ENCODE measurements at regions of chr13 and their contacts with region 1.

Region 1: GRCh38 chr13:27826379-27827353 is 34.4 kb downstream of the GSX1 start:
- DNase-seq: peak; percentile 12
- ATAC-seq: peak; percentile 83
- H3K4me3 ChIP-seq: no peak overlapping the region
- H3K27ac ChIP-seq: no peak overlapping the region
- H3K4me1 ChIP-seq: no peaks in the 10 kb centered on the region
- H3K27me3 ChIP-seq: peaks cover 2 to 6% of the 10 kb centered on the region in 2 experiments
- CTCF ChIP-seq: peak; percentile 87 to 96 (median 94)
- EP300 ChIP-seq: no peak
- POLR2A ChIP-seq: no peak
- RAD21 ChIP-seq: peak; percentile 87

Region 2: DNA sequence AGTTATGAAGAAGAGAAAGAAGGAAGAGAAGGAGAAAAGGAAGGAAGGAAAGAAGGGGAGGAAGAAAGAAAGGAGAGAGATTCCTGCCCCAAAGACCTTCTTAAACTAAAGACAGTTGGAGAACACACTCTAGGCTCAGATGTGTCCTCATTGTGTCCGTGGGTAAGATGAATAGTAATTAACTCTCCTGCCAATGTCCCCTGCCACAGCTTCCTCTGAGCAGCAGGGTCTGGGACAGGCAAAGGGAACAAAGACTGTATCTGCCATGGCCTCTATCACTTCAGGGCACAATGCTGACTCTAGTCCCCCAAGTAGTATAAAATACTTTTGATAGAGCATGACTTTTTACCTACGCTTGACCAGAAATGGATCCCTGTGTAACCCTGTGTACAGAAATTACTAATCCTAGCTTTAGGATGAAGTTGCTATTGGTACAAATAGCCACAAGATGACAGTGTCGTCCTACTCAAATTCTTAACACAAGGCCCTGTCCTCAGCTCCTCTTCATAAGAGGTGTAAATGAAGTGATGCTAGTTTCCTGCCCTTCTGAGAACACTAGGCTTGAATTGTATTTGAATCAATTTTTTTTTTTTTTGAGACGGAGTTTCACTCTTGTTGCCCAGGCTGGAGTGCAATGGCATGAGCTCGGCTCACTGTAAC is 879.9 kb before region 1 on chr13:
- CTCF ChIA-PET with region 1: interaction called, 19 read pairs
- POLR2A ChIA-PET with region 1: no interaction called
- RAD21 ChIA-PET with region 1: interaction called, 7 read pairs
- SMC1A ChIA-PET with region 1: interaction called, 10 read pairs
- in situ Hi-C with region 1: no loop called
- intact Hi-C with region 1: no loop called
- DNase-seq: peak; percentile 16
- ATAC-seq: peak; percentile 95
- H3K4me3 ChIP-seq: no peak overlapping the region
- H3K27ac ChIP-seq: no peak overlapping the region
- H3K4me1 ChIP-seq: no peaks in the 10 kb centered on the region
- H3K27me3 ChIP-seq: peaks cover 0 to 1% of the 10 kb centered on the region in 2 experiments; a peak in 1 of 4 replicates
- CTCF ChIP-seq: peak; percentile 68 to 86 (median 71)
- EP300 ChIP-seq: no peak
- POLR2A ChIP-seq: no peak
- RAD21 ChIP-seq: peak; percentile 82

Region 3: DNA sequence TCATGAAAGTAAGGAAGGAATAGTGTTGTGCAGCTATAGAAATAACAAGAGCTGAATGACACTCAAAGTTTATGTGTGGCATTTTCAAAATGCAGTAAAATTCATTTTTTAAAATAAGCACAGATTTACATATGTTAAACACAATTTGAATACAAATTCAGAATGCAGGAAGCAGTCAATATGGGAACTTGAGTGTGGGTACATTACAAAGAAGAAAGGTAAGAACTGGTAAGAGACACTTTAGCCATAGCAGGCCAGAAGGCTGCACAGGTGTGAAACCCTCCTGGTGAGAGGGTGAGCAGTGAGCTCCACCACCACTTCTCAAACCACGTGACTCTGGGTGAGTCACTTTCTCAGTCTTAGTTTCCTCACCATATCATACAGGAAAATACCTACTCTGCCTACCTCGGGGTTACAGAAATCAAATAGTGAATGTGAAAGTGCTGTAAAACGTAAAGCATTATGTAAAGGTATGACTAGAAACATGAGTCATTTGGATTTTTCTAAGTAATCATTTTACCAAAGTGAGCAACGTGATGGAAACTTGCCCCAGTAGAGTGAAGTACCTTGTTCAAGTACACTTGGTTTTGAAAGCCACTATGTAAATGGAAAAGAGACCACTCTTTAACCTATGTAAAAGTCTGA is 695.6 kb before region 1 on chr13:
- CTCF ChIA-PET with region 1: no interaction called
- POLR2A ChIA-PET with region 1: no interaction called
- RAD21 ChIA-PET with region 1: no interaction called
- SMC1A ChIA-PET with region 1: no interaction called
- in situ Hi-C with region 1: no loop called
- intact Hi-C with region 1: no loop called
- DNase-seq: peak; percentile 99
- ATAC-seq: peak; percentile 94
- H3K4me3 ChIP-seq: no peak overlapping the region
- H3K27ac ChIP-seq: peak overlapping the region; percentile 69; the same call in 1 of the 2 replicates
- H3K4me1 ChIP-seq: peaks cover 38% of the 10 kb centered on the region
- H3K27me3 ChIP-seq: no peaks in the 10 kb centered on the region
- CTCF ChIP-seq: no peak
- EP300 ChIP-seq: peak; percentile 92 to 95
- POLR2A ChIP-seq: no peak
- RAD21 ChIP-seq: no peak

Region 4: GRCh38 chr13:27374650-27375049 is 452.0 kb before region 1 on chr13:
- CTCF ChIA-PET with region 1: interaction called, 189 read pairs
- POLR2A ChIA-PET with region 1: no interaction called
- RAD21 ChIA-PET with region 1: interaction called, 14 read pairs
- SMC1A ChIA-PET with region 1: interaction called, 35 read pairs
- in situ Hi-C with region 1: loop called (anchors 5 kb)
- intact Hi-C with region 1: loop called (anchors 1 kb)
- DNase-seq: no peak
- ATAC-seq: peak; percentile 96
- H3K4me3 ChIP-seq: no peak overlapping the region
- H3K27ac ChIP-seq: no peak overlapping the region
- H3K4me1 ChIP-seq: no peaks in the 10 kb centered on the region
- H3K27me3 ChIP-seq: no peaks in the 10 kb centered on the region
- CTCF ChIP-seq: peak; percentile 68 to 86 (median 80)
- EP300 ChIP-seq: no peak
- POLR2A ChIP-seq: no peak
- RAD21 ChIP-seq: peak; percentile 84

Region 5: GRCh38 chr13:27533155-27533643 is 293.5 kb before region 1 on chr13:
- CTCF ChIA-PET with region 1: interaction called, 74 read pairs
- POLR2A ChIA-PET with region 1: no interaction called
- RAD21 ChIA-PET with region 1: interaction called, 46 read pairs
- SMC1A ChIA-PET with region 1: interaction called, 19 read pairs
- in situ Hi-C with region 1: no loop called
- intact Hi-C with region 1: loop called (anchors 1 kb)
- DNase-seq: no peak
- ATAC-seq: peak; percentile 92
- H3K4me3 ChIP-seq: no peak overlapping the region
- H3K27ac ChIP-seq: no peak overlapping the region
- H3K4me1 ChIP-seq: no peaks in the 10 kb centered on the region
- H3K27me3 ChIP-seq: no peaks in the 10 kb centered on the region
- CTCF ChIP-seq: peak; percentile 69 to 87 (median 79)
- EP300 ChIP-seq: no peak
- POLR2A ChIP-seq: no peak
- RAD21 ChIP-seq: peak; percentile 58

Region 6: DNA sequence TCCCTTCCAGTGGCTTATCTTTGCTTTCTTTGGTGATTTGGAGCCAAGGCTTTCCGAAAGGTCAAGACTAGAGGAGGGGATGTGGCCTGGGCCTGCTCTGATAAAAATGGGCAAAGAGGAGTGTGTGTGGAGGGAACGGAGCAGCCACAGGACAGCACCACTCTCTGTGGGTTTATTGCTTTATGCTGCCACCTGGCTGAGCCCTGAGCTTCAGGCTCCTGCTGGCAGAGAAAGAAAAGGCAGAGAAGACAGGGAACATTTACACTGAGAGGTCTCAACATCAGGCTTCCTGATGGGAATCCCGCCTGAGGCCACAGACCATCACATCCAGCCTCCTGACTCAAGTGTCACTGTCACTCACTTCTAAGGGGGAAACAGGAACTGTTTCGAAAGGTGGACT is 43.6 kb before region 1 on chr13:
- CTCF ChIA-PET with region 1: interaction called, 11 read pairs
- POLR2A ChIA-PET with region 1: no interaction called
- RAD21 ChIA-PET with region 1: no interaction called
- SMC1A ChIA-PET with region 1: interaction called, 5 read pairs
- in situ Hi-C with region 1: no loop called
- intact Hi-C with region 1: no loop called
- DNase-seq: no peak
- ATAC-seq: 0 out of 3 replicates have a peak, but pooled peaks have one; percentile 35
- H3K4me3 ChIP-seq: no peak overlapping the region
- H3K27ac ChIP-seq: no peak overlapping the region
- H3K4me1 ChIP-seq: no peaks in the 10 kb centered on the region
- H3K27me3 ChIP-seq: peaks cover 0 to 3% of the 10 kb centered on the region in 2 experiments; a peak in 2 of 4 replicates
- CTCF ChIP-seq: peak in 2 of 3 experiments; percentile 12 to 47; a peak in 2 of 6 replicates
- EP300 ChIP-seq: no peak
- POLR2A ChIP-seq: no peak
- RAD21 ChIP-seq: peak; percentile 37

Region 7: DNA sequence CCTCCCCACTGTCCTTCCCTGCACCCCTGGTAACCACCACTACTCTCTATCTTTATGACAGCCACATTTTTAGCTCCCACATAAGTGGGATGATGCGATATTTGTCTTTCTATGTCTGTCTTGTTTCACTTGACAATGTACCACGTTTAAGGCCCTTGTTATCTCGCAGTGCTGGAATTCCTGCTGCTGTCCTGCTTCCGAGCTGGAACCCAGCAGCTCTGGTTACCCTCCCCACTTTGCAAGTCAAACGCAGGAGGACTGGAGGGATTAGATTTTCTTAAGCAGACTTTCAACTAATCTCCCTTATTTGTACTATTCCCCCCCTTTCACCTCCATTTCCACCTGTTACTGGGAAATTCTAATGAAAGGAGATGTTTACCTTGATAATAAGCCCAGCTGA is 34.1 kb after region 1 on chr13:
- CTCF ChIA-PET with region 1: interaction called, 12 read pairs
- POLR2A ChIA-PET with region 1: no interaction called
- RAD21 ChIA-PET with region 1: no interaction called
- SMC1A ChIA-PET with region 1: interaction called, 7 read pairs
- in situ Hi-C with region 1: no loop called
- intact Hi-C with region 1: no loop called
- DNase-seq: no peak
- ATAC-seq: no peak
- H3K4me3 ChIP-seq: no peak overlapping the region
- H3K27ac ChIP-seq: no peak overlapping the region
- H3K4me1 ChIP-seq: no peaks in the 10 kb centered on the region
- H3K27me3 ChIP-seq: peaks cover 0 to 4% of the 10 kb centered on the region in 2 experiments; a peak in 3 of 4 replicates
- CTCF ChIP-seq: no peak
- EP300 ChIP-seq: no peak
- POLR2A ChIP-seq: no peak
- RAD21 ChIP-seq: no peak

Region 8: DNA sequence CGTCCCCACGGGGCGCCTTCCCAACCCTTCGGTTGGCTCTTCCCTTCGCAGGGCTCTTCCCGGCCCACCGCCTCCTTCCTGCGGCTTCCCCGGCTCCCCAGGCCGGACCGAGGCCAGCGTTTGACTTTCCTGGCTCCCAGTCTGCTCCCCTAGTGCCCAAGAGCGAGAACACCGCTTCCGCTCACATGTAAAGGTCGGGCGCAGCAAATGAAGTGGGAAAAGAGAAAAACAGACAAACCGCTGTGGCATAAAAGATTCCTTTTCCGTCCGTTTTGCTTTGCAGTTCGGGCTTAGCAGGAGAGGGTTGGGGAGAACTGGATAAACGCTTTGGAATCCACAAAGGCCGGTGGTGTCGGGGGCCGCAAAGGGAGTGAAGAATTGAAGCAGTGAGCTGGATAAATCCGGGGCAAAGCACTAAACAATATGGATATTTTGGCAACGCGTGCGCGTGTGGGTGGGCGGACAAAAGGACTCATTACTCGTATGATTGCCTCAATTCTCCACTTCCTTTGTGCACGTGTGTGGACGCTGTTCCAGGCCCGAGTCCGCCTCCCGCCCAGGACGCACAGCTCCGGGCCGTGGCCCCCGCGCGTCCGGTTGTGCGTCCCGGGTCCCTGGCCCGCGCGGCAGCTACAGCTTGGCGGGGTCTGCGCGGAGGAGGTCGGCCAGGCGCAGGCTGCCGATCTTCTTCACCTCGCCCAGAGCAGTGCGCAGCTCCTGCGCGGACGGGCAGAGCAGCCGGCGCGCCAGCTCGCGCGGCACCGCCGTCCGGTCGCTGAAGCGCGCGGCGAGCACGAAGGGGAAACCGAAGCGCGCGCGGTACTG is 151.0 kb after region 1 on chr13:
- CTCF ChIA-PET with region 1: interaction called, 238 read pairs
- POLR2A ChIA-PET with region 1: interaction called, 4 read pairs
- RAD21 ChIA-PET with region 1: interaction called, 85 read pairs
- SMC1A ChIA-PET with region 1: interaction called, 89 read pairs
- in situ Hi-C with region 1: loop called (anchors 5 kb)
- intact Hi-C with region 1: no loop called
- DNase-seq: no peak
- ATAC-seq: no peak
- H3K4me3 ChIP-seq: no peak overlapping the region
- H3K27ac ChIP-seq: no peak overlapping the region
- H3K4me1 ChIP-seq: no peaks in the 10 kb centered on the region
- H3K27me3 ChIP-seq: peaks cover 27 to 45% of the 10 kb centered on the region in 2 experiments
- CTCF ChIP-seq: no peak
- EP300 ChIP-seq: no peak
- POLR2A ChIP-seq: no peak
- RAD21 ChIP-seq: no peak